Activated CD4-positive, alpha-beta T cell treated with anti-CD3 and anti-CD28 coated beads for 36 hours (primary cell): ENCODE measurements at regions of chr17 and their contacts with region 1.

Region 1: GRCh38 chr17:40598663-40599467 is 33.6 kb upstream of the CCR7 start:
- DNase-seq: peak; percentile 93
- ATAC-seq: peak; percentile 57
- H3K4me3 Mint-ChIP-seq: peak overlapping the region; percentile 65
- H3K27ac Mint-ChIP-seq: peak overlapping the region; percentile 97
- H3K4me1 Mint-ChIP-seq: peaks cover 97% of the 10 kb centered on the region
- H3K27me3 Mint-ChIP-seq: no peaks in the 10 kb centered on the region

Region 2: GRCh38 chr17:39769974-39770587 is 828.8 kb before region 1 on chr17:
- CTCF ChIA-PET with region 1: no interaction called
- POLR2A ChIA-PET with region 1: no interaction called
- intact Hi-C with region 1: loop called in 1 of 2 experiments (anchors 10 kb)
- DNase-seq: peak; percentile 78
- ATAC-seq: peak; percentile 80
- H3K4me3 Mint-ChIP-seq: peak overlapping the region; percentile 7
- H3K27ac Mint-ChIP-seq: peak overlapping the region; percentile 82
- H3K4me1 Mint-ChIP-seq: peaks cover 96% of the 10 kb centered on the region
- H3K27me3 Mint-ChIP-seq: no peaks in the 10 kb centered on the region

Region 3: DNA sequence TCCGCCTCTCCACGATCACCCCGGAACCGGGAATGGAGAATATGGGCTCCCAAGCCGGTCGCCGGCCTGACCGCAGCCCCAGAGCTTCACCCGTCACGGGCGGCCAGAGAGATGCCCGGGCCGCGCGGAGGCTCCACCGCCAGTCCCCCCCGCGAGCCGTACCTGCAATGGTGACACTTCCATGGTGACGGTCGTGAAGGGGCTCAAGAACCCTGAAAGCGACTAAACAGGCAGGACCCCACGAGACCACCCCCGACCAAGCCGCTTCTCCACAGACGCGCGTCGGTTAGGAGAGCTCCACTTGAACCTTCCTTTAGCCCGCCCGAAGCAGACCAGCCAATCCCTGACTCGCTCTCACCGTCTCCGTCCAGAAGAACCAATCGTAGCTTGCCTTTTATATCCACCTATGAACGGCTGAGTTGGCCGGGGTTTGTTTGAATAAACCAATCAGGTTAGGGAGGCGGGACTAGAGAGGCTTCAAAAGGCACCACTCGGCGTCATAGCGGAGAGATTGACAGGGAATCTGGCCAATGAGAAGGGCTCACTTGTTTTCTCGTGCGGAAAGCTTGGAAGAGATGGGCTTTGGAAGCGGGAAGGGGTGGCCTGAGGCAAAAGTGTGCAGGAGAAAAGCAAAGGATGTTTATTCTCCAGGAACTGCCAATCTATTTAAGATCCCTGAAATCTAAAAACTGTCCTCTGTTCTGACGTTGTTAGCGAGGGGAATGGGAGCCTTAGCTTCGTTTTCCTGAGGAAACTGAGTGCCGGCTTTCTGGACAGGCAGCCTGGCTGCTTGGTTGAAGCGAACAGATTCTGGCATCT is 181.0 kb before region 1 on chr17 and contains the start of gene TOP2A:
- CTCF ChIA-PET with region 1: no interaction called
- POLR2A ChIA-PET with region 1: no interaction called
- intact Hi-C with region 1: no loop called
- DNase-seq: peak; percentile 95
- ATAC-seq: peak; percentile 99
- H3K4me3 Mint-ChIP-seq: peak within 1 kb of the TSS; percentile 86
- H3K27ac Mint-ChIP-seq: peak within 1 kb of the TSS; percentile 89
- H3K4me1 Mint-ChIP-seq: peaks cover 24% of the 10 kb centered on the region
- H3K27me3 Mint-ChIP-seq: no peaks in the 10 kb centered on the region
- total RNA-seq, gene TOP2A: 245 to 322 TPM

Region 4: DNA sequence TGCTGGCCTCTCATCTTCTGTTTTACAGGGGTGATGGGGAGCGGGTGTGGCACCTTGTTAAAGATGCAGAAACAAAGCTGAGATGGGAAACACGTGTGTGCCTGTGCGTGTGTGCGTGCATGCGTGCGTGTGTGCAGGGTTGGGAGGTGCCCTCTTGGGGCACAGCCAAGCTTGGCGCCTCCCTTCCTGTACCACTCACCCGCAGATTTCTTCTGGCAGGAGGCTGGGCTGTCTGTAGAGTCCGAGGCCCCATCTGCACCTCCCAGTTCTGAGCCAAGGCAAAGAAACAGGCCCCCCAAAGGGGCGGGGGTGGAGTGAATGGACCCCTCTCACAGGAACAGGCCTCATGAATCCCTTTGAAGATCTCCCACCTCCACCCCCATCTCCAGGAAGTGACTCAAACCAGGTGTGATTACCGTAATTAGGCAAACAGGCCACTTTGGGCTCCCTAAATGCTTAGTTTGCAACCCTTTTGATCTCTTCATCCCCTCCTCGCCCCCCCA is 118.3 kb before region 1 on chr17:
- CTCF ChIA-PET with region 1: no interaction called
- POLR2A ChIA-PET with region 1: no interaction called
- intact Hi-C with region 1: loop called in 1 of 2 experiments (anchors 2 kb)
- DNase-seq: peak; percentile 95
- ATAC-seq: peak; percentile 94
- H3K4me3 Mint-ChIP-seq: peak overlapping the region; percentile 60
- H3K27ac Mint-ChIP-seq: peak overlapping the region; percentile 96
- H3K4me1 Mint-ChIP-seq: peaks cover 70% of the 10 kb centered on the region
- H3K27me3 Mint-ChIP-seq: no peaks in the 10 kb centered on the region

Region 5: DNA sequence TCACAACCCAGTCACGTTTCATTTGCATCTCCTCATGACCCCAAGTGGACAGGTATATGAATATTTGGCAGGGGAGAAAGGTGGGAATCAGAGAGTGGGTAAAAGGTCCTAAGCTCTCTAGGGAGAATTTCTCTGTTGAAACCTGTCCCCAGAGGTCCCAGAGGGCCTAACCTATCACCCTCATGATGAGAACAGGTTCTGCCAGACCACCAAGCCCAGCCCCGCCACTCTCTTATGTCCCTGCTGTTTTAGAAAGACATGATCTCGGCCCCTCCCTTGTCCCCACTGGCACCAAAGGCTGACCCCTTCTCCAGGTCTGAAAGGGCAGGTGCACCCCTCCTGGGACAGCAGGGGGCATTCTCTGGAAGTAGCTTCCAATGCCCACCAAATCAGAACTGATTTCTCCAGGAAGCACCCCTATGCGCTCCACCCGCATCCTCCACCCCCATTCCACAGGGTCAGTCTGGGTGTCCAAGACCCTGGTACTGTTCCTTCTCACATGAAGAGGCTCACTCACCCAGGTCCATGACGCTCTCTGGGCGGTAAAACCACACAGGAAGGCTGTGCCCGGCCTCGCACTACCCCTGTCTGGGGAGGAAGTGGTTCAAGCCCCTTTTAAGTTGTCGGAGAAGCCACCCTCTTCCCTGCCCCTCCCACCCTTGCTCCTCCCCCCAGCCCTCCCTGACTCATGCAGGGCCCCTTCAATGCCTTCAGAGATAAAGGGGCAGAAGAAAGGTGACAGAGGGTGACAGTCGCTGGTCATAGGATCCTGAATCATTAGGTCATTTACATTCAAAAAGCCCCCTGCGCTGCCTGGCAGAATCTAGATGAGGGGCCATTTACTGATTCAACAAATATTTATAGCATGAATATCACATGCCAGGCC is 33.7 kb before region 1 on chr17 and contains the start of gene CCR7:
- CTCF ChIA-PET with region 1: interaction called, 71 read pairs
- POLR2A ChIA-PET with region 1: interaction called, 195 read pairs
- intact Hi-C with region 1: loop called (anchors 1 kb)
- DNase-seq: peak; percentile 92
- ATAC-seq: peak; percentile 28
- H3K4me3 Mint-ChIP-seq: peak within 1 kb of the TSS; percentile 94
- H3K27ac Mint-ChIP-seq: peak within 1 kb of the TSS; percentile 98
- H3K4me1 Mint-ChIP-seq: peaks cover 48% of the 10 kb centered on the region
- H3K27me3 Mint-ChIP-seq: no peaks in the 10 kb centered on the region
- total RNA-seq, gene CCR7: 325 to 389 TPM

Region 6: GRCh38 chr17:40647624-40648383 is 48.9 kb after region 1 on chr17 and contains the start of gene SMARCE1:
- CTCF ChIA-PET with region 1: no interaction called
- POLR2A ChIA-PET with region 1: no interaction called
- intact Hi-C with region 1: loop called in 1 of 2 experiments (anchors 1 kb)
- DNase-seq: peak; percentile 79
- ATAC-seq: peak; percentile 81
- H3K4me3 Mint-ChIP-seq: peak within 1 kb of the TSS; percentile 97
- H3K27ac Mint-ChIP-seq: peak within 1 kb of the TSS; percentile 99
- H3K4me1 Mint-ChIP-seq: peaks cover 40% of the 10 kb centered on the region
- H3K27me3 Mint-ChIP-seq: no peaks in the 10 kb centered on the region
- total RNA-seq, gene SMARCE1: 99.7 to 122 TPM